Endothelial cell of umbilical vein (primary cell): ENCODE measurements at regions of chr22 and their contacts with region 1.

Region 1: GRCh38 chr22:39439170-39439569 is 17.6 kb upstream of the MGAT3 start:
- DNase-seq: no peak
- H3K4me3 ChIP-seq: no peak overlapping the region
- H3K27ac ChIP-seq: no peak overlapping the region
- H3K4me1 ChIP-seq: peaks cover 4% of the 10 kb centered on the region
- H3K27me3 ChIP-seq: peaks cover 0 to 2% of the 10 kb centered on the region in 2 experiments
- CTCF ChIP-seq: no peak
- POLR2A ChIP-seq: no peak

Region 2: DNA sequence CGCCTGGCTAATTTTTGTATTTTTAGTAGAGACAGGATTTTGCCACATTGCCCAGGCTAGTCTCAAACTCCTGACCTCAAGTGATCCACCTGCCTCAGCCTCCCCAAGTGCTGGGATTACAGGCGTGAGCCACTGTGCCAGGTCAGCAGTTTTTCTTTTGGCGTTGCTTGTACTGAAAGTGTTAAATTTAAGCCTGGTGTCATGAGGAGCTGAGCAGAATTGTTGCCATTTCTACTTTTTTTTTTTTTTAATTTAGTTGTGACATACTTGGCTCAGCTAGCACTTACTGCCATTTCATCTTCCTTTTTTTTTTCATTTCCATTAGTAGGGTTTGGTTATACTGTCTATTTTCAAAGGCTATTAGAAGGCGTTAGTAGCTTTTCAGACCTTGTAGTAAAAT is 28.9 kb before region 1 on chr22:
- CTCF ChIA-PET with region 1: no interaction called
- POLR2A ChIA-PET with region 1: no interaction called
- dilution Hi-C with region 1: no loop called
- intact Hi-C with region 1: no loop called
- DNase-seq: no peak
- H3K4me3 ChIP-seq: no peak overlapping the region
- H3K27ac ChIP-seq: no peak overlapping the region
- H3K4me1 ChIP-seq: no peaks in the 10 kb centered on the region
- H3K27me3 ChIP-seq: no peaks in the 10 kb centered on the region
- CTCF ChIP-seq: no peak
- POLR2A ChIP-seq: no peak

Region 3: GRCh38 chr22:39452740-39453040 is 13.5 kb after region 1 on chr22:
- CTCF ChIA-PET with region 1: interaction called, 10 read pairs
- POLR2A ChIA-PET with region 1: no interaction called
- dilution Hi-C with region 1: no loop called
- intact Hi-C with region 1: no loop called
- DNase-seq: no peak
- H3K4me3 ChIP-seq: no peak overlapping the region
- H3K27ac ChIP-seq: no peak overlapping the region
- H3K4me1 ChIP-seq: no peaks in the 10 kb centered on the region
- H3K27me3 ChIP-seq: peaks cover 15 to 16% of the 10 kb centered on the region in 2 experiments
- CTCF ChIP-seq: no peak
- POLR2A ChIP-seq: no peak

Region 4: DNA sequence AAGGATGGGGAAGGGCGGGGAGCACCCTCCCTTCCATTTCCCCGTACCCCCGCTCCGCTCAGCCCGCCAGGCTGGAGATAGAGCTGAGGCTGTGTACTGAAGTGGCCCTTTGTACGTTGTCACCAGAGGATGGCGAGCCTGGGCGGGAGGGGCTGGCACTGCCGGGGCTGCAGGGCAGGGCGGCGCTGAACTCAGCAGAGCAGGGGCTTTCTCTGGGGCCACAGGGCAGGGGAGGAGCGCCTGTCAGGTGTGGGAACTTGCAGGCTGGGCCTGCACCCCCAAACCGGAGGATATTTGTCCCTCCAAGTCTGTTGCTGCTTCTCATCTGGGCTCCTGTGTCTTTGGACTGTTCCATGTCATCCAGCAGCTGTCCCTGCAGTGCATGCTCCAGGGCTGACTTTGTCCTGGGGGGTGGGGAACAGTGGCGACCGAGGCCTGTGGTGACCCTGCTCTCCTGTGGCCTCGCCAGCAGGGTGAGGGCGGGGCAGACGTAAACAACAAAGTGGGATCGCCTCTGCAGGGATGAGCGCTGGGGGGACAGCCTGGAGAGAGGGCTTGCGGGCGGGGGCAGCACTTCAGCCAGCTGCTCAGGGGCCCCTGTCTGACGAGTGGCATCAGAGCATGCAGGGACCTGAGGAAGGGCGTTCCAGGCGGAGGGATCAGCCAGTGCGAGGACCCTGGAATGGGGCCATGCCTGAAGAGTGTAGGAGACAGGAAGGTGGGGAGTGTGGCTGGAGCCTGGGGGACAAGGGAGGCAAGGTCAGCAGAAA is 30.7 kb after region 1 on chr22:
- CTCF ChIA-PET with region 1: no interaction called
- POLR2A ChIA-PET with region 1: no interaction called
- dilution Hi-C with region 1: no loop called
- intact Hi-C with region 1: no loop called
- DNase-seq: no peak
- H3K4me3 ChIP-seq: no peak overlapping the region
- H3K27ac ChIP-seq: no peak overlapping the region
- H3K4me1 ChIP-seq: peaks cover 3% of the 10 kb centered on the region
- H3K27me3 ChIP-seq: no peaks in the 10 kb centered on the region
- CTCF ChIP-seq: no peak
- POLR2A ChIP-seq: no peak

Region 5: DNA sequence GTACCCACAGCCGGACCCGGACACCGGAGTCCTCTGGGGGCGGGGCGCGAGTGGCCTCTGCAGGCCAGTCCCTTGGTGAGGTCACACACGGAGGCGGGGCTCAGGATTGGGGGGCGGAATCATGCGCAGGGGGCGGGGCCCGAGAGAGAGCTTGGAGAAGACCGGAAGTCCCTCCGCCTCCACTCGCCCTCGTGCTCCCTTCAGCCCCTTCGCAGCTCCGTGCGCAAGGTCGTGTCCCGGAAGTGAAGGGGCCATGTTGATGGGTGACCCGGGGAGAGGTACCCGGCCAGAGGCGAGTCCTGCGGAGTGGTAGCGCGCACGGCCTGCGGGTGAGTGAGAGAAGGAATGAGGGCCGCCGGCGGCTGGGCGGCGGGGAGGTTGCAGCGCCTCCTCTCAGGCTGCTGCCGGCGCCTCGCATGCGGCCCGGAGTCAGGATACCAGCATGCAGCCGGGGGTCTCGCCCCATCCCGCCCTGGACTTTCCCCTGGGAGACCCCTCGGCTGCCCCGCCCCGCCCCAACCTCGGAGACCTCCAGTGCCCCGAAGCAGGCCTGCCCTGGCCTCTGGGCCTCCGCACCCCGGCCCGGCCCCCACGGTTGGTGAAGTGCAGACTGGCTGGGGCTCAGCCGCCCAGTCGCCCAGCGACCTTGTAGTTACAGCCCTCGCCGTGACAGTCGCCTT is 63.1 kb after region 1 on chr22 and contains the start of gene MIEF1:
- CTCF ChIA-PET with region 1: interaction called, 8 read pairs
- POLR2A ChIA-PET with region 1: no interaction called
- dilution Hi-C with region 1: no loop called
- intact Hi-C with region 1: loop called (anchors 5 kb)
- DNase-seq: peak; percentile 96
- H3K4me3 ChIP-seq: peak within 1 kb of the TSS; percentile 51 to 76 (median 67)
- H3K27ac ChIP-seq: peak within 1 kb of the TSS; percentile 5
- H3K4me1 ChIP-seq: peaks cover 12% of the 10 kb centered on the region
- H3K27me3 ChIP-seq: peaks cover 0 to 3% of the 10 kb centered on the region in 2 experiments
- CTCF ChIP-seq: no peak
- POLR2A ChIP-seq: peak; percentile 79
- total RNA-seq, gene MIEF1: 24.7 and 31.1 TPM in 2 replicates